Vagina (tissue), 2 donors: ENCODE measurements at regions of chr17 and their contacts with region 1.

Region 1: GRCh38 chr17:78925234-78925633 is at the start of gene TIMP2:
- DNase-seq: no peak
- H3K4me3 ChIP-seq: peak within 1 kb of the TSS; percentile 66 to 81
- H3K27ac ChIP-seq: peak within 1 kb of the TSS; percentile 99
- H3K4me1 ChIP-seq: peaks cover 57% of the 10 kb centered on the region
- H3K27me3 ChIP-seq: no peaks in the 10 kb centered on the region
- CTCF ChIP-seq: no peak
- POLR2A ChIP-seq: peak in 1 of 2 donors; percentile 55
- total RNA-seq, gene TIMP2: 181 TPM

Region 2: GRCh38 chr17:78865682-78866390 is 59.4 kb before region 1 on chr17:
- intact Hi-C with region 1: loop called (anchors 2 kb)
- DNase-seq: no peak
- H3K4me3 ChIP-seq: no peak overlapping the region
- H3K27ac ChIP-seq: peak overlapping the region; percentile 92
- H3K4me1 ChIP-seq: peaks cover 27% of the 10 kb centered on the region
- H3K27me3 ChIP-seq: no peaks in the 10 kb centered on the region
- CTCF ChIP-seq: peak; percentile 69 to 91 (median 75)
- POLR2A ChIP-seq: no peak

Region 3: GRCh38 chr17:78883164-78884122 is 41.8 kb before region 1 on chr17:
- intact Hi-C with region 1: loop called (anchors 5 kb)
- DNase-seq: peak in 1 of 2 donors; percentile 95
- H3K4me3 ChIP-seq: peak overlapping the region; percentile 34 to 52
- H3K27ac ChIP-seq: peak overlapping the region; percentile 99
- H3K4me1 ChIP-seq: peaks cover 76% of the 10 kb centered on the region
- H3K27me3 ChIP-seq: no peaks in the 10 kb centered on the region
- CTCF ChIP-seq: no peak
- POLR2A ChIP-seq: peak in 1 of 2 donors; percentile 55

Region 4: DNA sequence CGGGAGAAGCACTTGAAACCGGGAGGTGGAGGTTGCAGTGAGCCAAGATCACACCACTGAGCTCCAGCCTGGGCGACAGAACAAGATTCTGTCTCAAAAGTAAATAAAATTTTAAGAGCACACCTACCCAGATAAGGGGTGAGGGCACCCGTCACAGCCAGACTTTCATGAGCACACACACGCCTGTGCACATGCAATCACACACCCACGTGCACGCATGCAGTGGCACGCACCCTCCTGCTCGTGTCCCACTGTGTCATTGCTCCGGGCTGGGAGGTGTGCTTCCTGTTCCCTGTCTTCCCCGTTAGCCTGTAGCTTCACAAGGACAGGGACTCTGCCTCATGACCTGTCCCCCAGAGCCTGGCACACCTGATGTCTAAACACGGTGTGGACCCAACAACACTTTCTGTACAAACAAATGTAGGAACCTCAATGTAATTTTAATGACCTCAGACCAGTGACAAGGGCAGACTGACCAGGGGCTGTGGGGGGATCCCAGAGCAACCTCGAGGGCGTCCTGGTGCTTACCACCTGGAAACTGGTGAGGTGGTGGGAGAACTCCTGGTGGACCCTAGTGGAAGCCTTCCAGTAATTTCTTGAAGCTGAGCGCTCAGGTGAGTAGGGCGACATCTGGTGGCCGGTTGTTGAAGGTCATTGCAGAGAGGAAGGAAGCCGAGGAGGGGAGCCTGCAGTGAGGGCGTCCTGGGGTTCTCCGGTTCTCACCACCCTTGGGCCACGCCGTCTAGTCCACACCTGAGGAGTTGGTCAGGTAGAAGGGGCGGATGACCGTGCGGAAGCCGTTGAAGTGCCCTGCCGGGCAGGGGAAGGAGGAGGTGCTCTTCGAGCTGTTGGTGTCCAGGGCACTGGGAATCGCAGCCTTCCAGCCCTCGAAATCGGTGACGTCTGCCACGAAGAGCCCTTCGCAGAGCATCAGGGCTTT is 45.9 kb after region 1 on chr17:
- intact Hi-C with region 1: loop called (anchors 10 kb)
- DNase-seq: no peak
- H3K4me3 ChIP-seq: no peak overlapping the region
- H3K27ac ChIP-seq: peak overlapping the region; percentile 89
- H3K4me1 ChIP-seq: peaks cover 50% of the 10 kb centered on the region
- H3K27me3 ChIP-seq: no peaks in the 10 kb centered on the region
- CTCF ChIP-seq: peak; percentile 78 to 95 (median 92)
- POLR2A ChIP-seq: no peak